Heart left ventricle (tissue), 16 donors: ENCODE measurements at regions of chr17 and their contacts with region 1.

Region 1: DNA sequence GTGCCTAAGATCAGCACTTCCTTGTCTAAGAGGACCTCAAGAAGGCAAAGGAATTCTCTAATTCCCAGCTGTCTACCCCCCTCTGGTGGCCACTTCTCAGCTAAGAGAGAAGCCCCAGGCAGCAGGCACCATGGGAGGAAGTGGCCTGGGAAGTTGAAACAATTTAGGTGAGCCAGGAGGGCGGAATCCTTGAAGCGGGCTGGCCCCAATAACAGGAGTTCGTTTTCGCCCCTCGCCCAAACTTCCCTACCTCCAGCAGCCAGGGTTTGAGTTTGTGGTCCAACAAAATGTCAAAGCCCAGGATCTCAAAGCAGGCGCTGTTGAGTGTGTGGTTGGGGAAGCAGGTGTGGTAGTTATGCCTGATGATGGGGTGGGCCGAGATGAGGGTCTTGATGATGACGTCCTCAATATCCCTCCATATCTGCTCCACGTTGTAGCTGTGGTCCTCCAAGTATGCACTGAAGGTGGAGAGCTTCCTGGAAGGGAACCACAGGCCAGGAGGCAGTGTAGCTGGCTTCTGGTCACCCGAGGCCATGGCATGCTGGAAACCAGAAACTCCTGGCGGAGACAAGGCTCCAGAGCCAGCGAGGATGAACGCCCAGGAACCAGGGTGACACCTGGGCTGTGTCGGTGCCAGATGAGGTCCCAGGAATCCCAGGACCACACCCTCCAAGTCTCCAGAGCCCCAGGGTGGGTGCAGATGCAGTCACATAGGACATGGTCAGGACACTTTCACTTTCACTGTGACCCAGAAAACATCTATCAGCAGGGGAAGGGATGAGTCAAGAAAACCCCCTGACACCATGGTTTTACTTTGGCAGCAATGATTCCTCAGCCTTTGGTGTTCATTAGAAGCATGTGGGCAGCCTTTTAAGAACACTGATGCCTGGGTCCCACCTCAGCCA is 25.6 kb downstream of the TTLL6 start:
- DNase-seq: peak; percentile 70 to 79 (median 73)
- ATAC-seq: peak; percentile 74 to 87 (median 82)
- H3K4me3 ChIP-seq: no peak overlapping the region
- H3K27ac ChIP-seq: no peak overlapping the region
- H3K4me1 ChIP-seq: peaks cover 0 to 11% (median 0%) of the 10 kb centered on the region in 12 donors
- H3K27me3 ChIP-seq: peaks cover 0 to 46% (median 3%) of the 10 kb centered on the region in 9 donors
- CTCF ChIP-seq: peak; percentile 58 to 82 (median 73)
- POLR2A ChIP-seq: no peak

Region 2: GRCh38 chr17:48671697-48672171 is 119.6 kb before region 1 on chr17:
- intact Hi-C with region 1: loop called in 6 of 10 experiments (anchors 1 to 5 kb)
- DNase-seq: peak; percentile 65 to 84 (median 78)
- ATAC-seq: peak in 3 of 4 donors; percentile 70 to 79 (median 74)
- H3K4me3 ChIP-seq: peak overlapping the region in 10 of 12 donors; percentile 15 to 41 (median 28)
- H3K27ac ChIP-seq: no peak overlapping the region
- H3K4me1 ChIP-seq: peaks cover 0 to 11% (median 4%) of the 10 kb centered on the region in 12 donors
- H3K27me3 ChIP-seq: peaks cover 0 to 78% (median 33%) of the 10 kb centered on the region in 9 donors
- CTCF ChIP-seq: peak; percentile 79 to 92 (median 86)
- POLR2A ChIP-seq: no peak

Region 3: GRCh38 chr17:48678141-48678971 is 113.0 kb before region 1 on chr17:
- intact Hi-C with region 1: loop called (anchors 1 to 5 kb)
- DNase-seq: peak; percentile 30 to 80 (median 48)
- ATAC-seq: peak in 3 of 4 donors; percentile 76 to 86 (median 82)
- H3K4me3 ChIP-seq: no peak overlapping the region
- H3K27ac ChIP-seq: no peak overlapping the region
- H3K4me1 ChIP-seq: peaks cover 0 to 6% (median 0%) of the 10 kb centered on the region in 12 donors
- H3K27me3 ChIP-seq: peaks cover 9 to 80% (median 32%) of the 10 kb centered on the region in 9 donors
- CTCF ChIP-seq: peak; percentile 83 to 98 (median 91)
- POLR2A ChIP-seq: no peak

Region 4: DNA sequence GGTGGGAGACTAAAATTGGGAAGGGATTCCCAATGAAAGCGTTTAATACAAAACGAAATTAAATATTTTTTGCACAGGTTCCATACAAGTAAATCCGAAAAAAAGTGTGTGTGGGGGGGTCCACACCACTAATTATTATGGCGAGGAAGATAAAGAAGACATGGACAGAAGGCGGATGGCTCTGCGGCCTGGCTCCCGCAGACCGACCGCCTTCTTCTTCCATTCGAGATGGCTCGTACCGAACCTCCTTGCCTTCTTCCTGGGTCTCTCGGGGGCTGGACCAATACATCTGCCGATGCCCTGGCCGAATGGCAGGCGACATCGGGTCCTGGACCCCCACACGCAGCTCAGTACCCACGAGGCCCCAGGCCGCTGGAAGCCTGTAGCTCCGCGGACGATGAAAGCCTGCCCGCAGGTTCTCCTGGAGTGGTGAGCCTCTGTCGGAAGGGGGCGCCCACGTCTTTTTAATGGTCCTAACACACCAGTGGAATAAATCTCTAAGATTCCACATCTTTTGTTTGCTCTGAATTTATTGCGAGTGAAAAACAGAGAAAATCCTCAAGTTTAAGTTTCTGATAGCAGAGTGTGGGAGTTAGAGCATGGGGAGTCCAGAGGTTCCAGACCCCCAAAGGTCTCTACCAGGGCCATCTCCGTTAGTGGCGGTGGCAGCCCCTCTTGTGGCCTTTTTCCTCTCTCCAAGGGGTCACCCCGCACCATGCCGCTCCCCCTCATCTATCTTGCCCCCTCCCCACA is 67.0 kb before region 1 on chr17:
- intact Hi-C with region 1: loop called (anchors 2 to 5 kb)
- DNase-seq: peak; percentile 77 to 90 (median 83)
- ATAC-seq: peak; percentile 56 to 93 (median 85)
- H3K4me3 ChIP-seq: no peak overlapping the region
- H3K27ac ChIP-seq: no peak overlapping the region
- H3K4me1 ChIP-seq: peaks cover 0 to 40% (median 17%) of the 10 kb centered on the region in 12 donors
- H3K27me3 ChIP-seq: peaks cover 78 to 100% (median 100%) of the 10 kb centered on the region in 9 donors
- CTCF ChIP-seq: peak; percentile 44 to 82 (median 72)
- POLR2A ChIP-seq: no peak